Right lobe of liver (tissue), 6 donors: ENCODE measurements at regions of chr15 and their contacts with region 1.

Region 1: DNA sequence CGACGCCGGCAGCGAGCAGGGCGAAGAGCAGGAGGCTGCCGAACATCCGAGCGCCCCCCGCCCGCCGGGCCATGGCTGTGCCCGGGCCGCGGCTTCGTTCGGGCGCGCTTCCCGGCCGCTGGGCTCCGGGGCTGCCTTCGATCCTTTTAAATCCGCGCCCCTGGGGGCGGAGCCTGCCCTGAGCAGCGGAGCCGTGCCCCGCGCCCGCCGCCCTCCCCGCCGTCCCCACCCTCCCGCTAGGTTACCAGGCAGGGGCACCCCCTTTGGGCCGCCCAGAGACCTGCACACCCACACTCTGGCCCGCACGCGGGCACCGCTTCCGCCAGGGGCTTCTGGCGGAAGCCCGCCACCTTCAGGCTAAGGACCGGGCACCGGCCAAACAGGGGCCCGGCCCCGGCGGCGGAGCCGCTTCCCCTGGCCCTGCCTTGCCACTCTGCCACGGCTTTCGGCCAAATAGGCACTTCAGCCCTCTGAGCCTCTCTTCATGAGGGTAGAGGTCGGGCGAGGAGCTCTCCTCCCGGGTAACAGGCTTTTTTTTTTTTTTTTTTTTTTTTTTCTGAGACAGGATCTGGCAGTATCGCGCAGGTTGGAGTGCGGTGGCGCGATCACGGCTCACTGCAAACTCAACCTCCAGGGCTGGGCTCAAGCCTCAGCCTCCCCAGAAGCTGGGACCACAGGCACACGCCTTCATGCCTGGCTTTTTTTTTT is at the start of gene NMB:
- DNase-seq: peak; percentile 83 to 87 (median 86)
- ATAC-seq: peak; percentile 70 to 87 (median 74)
- H3K4me3 ChIP-seq: peak within 1 kb of the TSS; percentile 32 to 59 (median 55)
- H3K27ac ChIP-seq: peak within 1 kb of the TSS; percentile 20 to 71 (median 51)
- H3K4me1 ChIP-seq: peaks cover 0 to 14% (median 0%) of the 10 kb centered on the region in 4 donors
- H3K27me3 ChIP-seq: no peaks in the 10 kb centered on the region
- CTCF ChIP-seq: peak; percentile 42 to 59 (median 58)
- POLR2A ChIP-seq: no peak
- total RNA-seq, gene NMB: 0.76 to 3.8 (median 1.7) TPM

Region 2: GRCh38 chr15:84716036-84716799 is 58.0 kb after region 1 on chr15 and contains the start of gene SEC11A:
- intact Hi-C with region 1: loop called in 1 of 2 experiments (anchors 10 kb)
- DNase-seq: peak; percentile 97 to 98 (median 97)
- ATAC-seq: peak; percentile 96 to 99 (median 97)
- H3K4me3 ChIP-seq: peak within 1 kb of the TSS; percentile 77 to 88 (median 86)
- H3K27ac ChIP-seq: peak within 1 kb of the TSS; percentile 60 to 89 (median 80)
- H3K4me1 ChIP-seq: peaks cover 0 to 15% (median 5%) of the 10 kb centered on the region in 4 donors
- H3K27me3 ChIP-seq: no peaks in the 10 kb centered on the region
- CTCF ChIP-seq: peak in 1 of 4 donors; percentile 21
- POLR2A ChIP-seq: peak; percentile 83
- total RNA-seq, gene SEC11A: 58.7 to 71.5 (median 65.3) TPM

Region 3: GRCh38 chr15:84871428-84872305 is 213.4 kb after region 1 on chr15:
- intact Hi-C with region 1: no loop called
- DNase-seq: no peak
- ATAC-seq: peak; percentile 11 to 38 (median 27)
- H3K4me3 ChIP-seq: no peak overlapping the region
- H3K27ac ChIP-seq: no peak overlapping the region
- H3K4me1 ChIP-seq: peaks cover 0 to 15% (median 0%) of the 10 kb centered on the region in 4 donors
- H3K27me3 ChIP-seq: no peaks in the 10 kb centered on the region
- CTCF ChIP-seq: peak in 1 of 4 donors; percentile 30
- POLR2A ChIP-seq: no peak

Region 4: DNA sequence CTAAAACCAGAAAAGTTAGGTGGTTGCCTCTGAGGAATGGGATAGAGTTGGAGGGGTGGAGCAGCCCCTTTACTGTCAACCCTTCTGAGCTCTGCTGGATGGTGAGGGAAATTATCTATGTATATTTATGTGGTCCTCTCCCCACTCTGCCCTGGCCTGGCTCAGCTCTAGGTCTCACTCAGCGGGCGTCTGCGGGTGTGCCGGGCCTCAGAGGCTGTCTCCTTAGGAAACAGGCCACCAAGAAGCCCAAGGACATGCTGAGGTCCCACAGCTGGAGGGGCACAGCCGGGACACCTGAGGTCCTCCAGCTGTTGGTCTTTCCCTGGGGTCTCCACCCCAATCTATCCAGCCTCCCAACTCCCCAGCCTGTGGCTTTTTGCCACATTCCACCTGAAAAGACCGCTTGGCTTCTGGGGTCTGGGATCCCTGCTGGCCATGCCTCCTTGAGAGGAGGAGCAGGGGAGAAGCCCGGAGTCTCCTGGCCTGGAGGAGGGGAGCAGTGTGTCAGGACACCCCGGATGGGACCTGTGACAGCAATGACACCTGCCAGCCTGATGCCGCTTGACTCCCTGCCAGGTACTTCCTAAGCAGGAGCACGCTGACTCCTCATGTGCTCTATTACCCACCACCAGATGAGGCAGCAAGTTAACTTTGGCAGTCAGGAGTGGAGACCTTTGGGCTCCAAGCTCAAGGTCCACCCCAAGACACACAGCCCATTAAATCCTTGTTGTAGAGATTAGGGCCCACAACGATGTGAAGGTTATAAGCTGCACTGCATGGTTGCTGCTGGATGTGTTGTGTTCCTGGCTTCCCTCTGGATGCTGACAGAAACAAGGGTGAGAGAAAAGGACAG is 225.9 kb after region 1 on chr15 and contains the start of gene SLC28A1:
- intact Hi-C with region 1: loop called in 1 of 2 experiments (anchors 10 kb)
- DNase-seq: peak; percentile 88 to 95 (median 91)
- ATAC-seq: peak; percentile 69 to 87 (median 79)
- H3K4me3 ChIP-seq: peak within 1 kb of the TSS; percentile 46 to 67 (median 58)
- H3K27ac ChIP-seq: peak within 1 kb of the TSS; percentile 95 to 98 (median 96)
- H3K4me1 ChIP-seq: peaks cover 0 to 28% (median 10%) of the 10 kb centered on the region in 4 donors
- H3K27me3 ChIP-seq: no peaks in the 10 kb centered on the region
- CTCF ChIP-seq: no peak
- POLR2A ChIP-seq: peak; percentile 96
- total RNA-seq, gene SLC28A1: 33.2 to 75.4 (median 49.9) TPM